ENCODE measurements at regions of chr19 and their contacts with region 1.

Region 1: GRCh38 chr19:35462476-35462953 is 14.5 kb downstream of the FFAR2 start:
- DNase-seq: peak; percentile 54 to 89
- ATAC-seq: peak; percentile 89 to 96 (median 90)
- H3K4me3 ChIP-seq: no peak overlapping the region
- H3K4me3 Mint-ChIP-seq: peak overlapping the region; percentile 83
- H3K27ac ChIP-seq: peak overlapping the region; percentile 88
- H3K27ac Mint-ChIP-seq: peak overlapping the region; percentile 90 to 93
- H3K4me1 ChIP-seq: peaks cover 60% of the 10 kb centered on the region
- H3K4me1 Mint-ChIP-seq: peaks cover 29 to 30% of the 10 kb centered on the region in 2 donors
- H3K27me3 ChIP-seq: no peaks in the 10 kb centered on the region
- H3K27me3 Mint-ChIP-seq: no peaks in the 10 kb centered on the region
- CTCF ChIP-seq: no peak

Region 2: DNA sequence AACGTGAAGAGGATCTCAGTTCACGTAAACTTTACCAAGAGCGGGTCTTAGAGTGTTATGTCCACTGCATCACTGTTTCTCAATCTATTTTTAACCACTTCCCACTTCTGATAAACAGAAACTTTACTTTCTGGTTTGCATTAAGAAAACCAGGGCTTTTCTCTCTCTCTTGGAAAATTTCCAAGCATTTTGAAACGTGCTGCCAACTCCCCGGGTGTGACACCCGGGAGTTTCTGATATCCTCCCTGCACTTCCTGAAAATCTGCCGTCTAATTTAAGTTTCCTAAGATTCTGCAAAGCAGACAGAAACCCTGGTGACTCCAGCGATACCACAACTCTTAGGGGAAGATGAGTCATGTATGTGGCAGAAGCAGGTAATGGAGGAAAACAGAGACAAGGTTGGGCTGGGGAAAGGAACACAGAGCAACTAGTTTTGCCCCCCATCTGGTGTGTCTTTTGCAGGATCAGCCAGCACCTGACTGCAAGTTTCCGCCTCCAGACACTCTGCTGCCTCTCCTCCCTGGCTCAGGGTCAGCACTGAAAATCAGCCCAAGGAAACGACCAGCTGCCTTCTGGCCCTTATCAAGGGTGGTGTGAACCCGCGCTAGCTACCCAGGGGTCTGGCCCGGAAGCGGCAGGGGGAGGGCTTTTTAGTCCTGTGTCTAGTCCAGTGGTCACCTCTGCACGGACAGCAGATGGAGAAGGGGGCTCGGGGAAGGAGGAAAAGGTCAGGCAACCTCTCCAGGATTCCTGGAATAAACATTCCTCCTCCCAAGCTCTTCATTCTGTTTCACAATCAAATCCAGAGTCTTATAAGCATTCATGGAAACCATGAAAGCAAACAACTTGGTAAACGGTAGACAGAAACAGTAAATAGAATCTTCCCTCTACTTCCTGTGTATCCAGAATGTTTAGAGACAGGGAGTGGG is 25.8 kb before region 1 on chr19:
- intact Hi-C with region 1: loop called (anchors 1 kb)
- DNase-seq: peak in 1 of 2 donors; percentile 38
- ATAC-seq: peak; percentile 72 to 83 (median 75)
- H3K4me3 ChIP-seq: no peak overlapping the region
- H3K4me3 Mint-ChIP-seq: peak overlapping the region; percentile 77
- H3K27ac ChIP-seq: no peak overlapping the region
- H3K27ac Mint-ChIP-seq: peak overlapping the region; percentile 46 to 84
- H3K4me1 ChIP-seq: peaks cover 24% of the 10 kb centered on the region
- H3K4me1 Mint-ChIP-seq: peaks cover 18 to 20% of the 10 kb centered on the region in 2 donors
- H3K27me3 ChIP-seq: no peaks in the 10 kb centered on the region
- H3K27me3 Mint-ChIP-seq: peaks cover 0 to 7% of the 10 kb centered on the region in 2 donors
- CTCF ChIP-seq: no peak

Region 3: DNA sequence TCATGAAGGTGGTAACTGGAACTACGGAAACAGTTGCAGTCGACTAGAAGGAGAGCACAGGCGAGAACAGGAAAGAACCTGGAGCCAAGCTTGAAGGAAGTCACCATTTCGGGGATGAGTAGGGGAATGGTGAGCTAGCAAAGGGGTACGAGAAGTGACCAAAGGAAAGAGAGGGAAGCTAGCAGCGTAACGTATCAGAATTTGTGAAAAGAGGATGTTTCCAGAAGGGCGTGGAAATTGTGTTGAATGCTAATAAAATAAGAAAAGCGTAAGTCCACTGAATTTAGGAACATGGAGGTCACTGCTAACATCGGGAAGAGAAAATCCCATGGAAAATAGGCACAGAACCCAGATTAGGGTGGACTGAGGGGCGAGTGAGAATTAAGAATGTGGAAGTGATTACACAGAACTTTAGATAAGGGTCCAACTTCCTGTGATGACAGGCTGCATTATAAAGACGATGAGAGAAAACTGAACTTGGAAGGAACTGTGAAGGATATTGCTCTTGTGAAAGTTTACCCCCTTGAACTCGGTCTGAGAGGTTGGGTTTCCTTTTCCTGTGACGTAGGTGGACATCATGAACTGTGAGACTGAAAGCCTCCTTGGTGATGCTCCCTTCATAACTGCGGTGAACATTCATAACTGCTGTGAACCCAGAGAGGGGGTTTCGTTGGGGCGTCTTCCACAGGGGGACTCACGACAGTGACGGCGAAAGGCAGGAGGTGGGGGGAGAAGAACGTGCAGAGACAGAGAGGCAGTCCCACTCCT is 16.5 kb before region 1 on chr19:
- intact Hi-C with region 1: loop called (anchors 2 kb)
- DNase-seq: peak; percentile 38 to 74
- ATAC-seq: peak; percentile 90 to 96 (median 92)
- H3K4me3 ChIP-seq: no peak overlapping the region
- H3K4me3 Mint-ChIP-seq: peak overlapping the region; percentile 77
- H3K27ac ChIP-seq: peak overlapping the region; percentile 61
- H3K27ac Mint-ChIP-seq: peak overlapping the region; percentile 88 to 96
- H3K4me1 ChIP-seq: peaks cover 51% of the 10 kb centered on the region
- H3K4me1 Mint-ChIP-seq: peaks cover 36 to 43% of the 10 kb centered on the region in 2 donors
- H3K27me3 ChIP-seq: no peaks in the 10 kb centered on the region
- H3K27me3 Mint-ChIP-seq: peaks cover 0 to 12% of the 10 kb centered on the region in 2 donors
- CTCF ChIP-seq: no peak

Region 4: DNA sequence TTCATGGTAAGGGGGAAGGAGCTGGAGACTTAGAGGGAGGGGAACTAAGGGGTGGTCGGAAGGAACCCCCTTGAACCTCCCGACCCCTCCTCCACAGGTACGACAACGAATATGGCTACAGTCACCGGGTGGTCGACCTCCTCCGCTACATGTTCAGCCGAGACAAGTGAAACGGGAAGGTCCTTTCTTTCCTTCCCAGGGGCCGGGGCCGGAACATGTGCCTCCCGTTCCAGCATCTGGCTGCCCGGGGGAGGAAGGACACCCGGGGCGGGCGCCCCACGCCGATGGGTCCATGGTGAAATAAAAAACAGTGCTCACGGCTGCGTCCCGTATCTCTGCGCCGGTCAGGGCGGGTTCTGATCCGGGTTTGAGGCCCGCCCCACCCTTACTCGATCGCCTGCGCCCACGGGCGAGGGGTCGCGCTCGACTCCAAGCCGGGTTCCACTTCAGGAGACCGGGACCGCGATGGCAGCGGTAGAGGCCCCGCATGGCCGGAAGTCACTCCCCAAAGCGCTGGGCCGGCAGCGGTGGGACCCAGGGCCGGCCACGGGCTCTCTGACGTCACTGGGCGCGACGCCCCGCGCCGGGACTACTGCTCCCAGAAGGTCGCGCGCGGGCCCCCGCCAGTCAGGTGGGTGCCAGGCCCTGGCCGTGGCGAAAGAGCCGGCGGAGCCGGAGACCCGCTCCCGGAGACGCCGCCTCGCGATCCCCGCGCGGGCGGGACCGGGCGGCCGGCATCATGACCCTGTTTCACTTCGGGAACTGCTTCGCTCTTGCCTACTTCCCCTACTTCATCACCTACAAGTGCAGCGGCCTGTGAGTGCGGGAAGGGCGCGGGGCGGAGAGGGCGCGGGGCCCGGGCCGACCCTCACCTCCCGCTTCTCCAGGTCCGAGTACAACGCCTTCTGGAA is 82.7 kb after region 1 on chr19 and contains the start of gene TMEM147:
- intact Hi-C with region 1: loop called (anchors 2 kb)
- DNase-seq: peak; percentile 79 to 83
- ATAC-seq: peak; percentile 73 to 87 (median 81)
- H3K4me3 ChIP-seq: peak within 1 kb of the TSS; percentile 95
- H3K4me3 Mint-ChIP-seq: peak within 1 kb of the TSS; percentile 95
- H3K27ac ChIP-seq: peak within 1 kb of the TSS; percentile 77
- H3K27ac Mint-ChIP-seq: peak within 1 kb of the TSS; percentile 80 to 91
- H3K4me1 ChIP-seq: peaks cover 28% of the 10 kb centered on the region
- H3K4me1 Mint-ChIP-seq: peaks cover 34 to 49% of the 10 kb centered on the region in 2 donors
- H3K27me3 ChIP-seq: no peaks in the 10 kb centered on the region
- H3K27me3 Mint-ChIP-seq: no peaks in the 10 kb centered on the region
- CTCF ChIP-seq: no peak
- total RNA-seq, gene TMEM147: 30.6 to 37.9 (median 31.2) TPM

Measured in natural killer cell (primary cell).